Activated naive CD4-positive, alpha-beta T cell treated with anti-CD3 and anti-CD28 coated beads for 36 hours (primary cell): ENCODE measurements at regions of chr1 and their contacts with region 1.

Region 1: DNA sequence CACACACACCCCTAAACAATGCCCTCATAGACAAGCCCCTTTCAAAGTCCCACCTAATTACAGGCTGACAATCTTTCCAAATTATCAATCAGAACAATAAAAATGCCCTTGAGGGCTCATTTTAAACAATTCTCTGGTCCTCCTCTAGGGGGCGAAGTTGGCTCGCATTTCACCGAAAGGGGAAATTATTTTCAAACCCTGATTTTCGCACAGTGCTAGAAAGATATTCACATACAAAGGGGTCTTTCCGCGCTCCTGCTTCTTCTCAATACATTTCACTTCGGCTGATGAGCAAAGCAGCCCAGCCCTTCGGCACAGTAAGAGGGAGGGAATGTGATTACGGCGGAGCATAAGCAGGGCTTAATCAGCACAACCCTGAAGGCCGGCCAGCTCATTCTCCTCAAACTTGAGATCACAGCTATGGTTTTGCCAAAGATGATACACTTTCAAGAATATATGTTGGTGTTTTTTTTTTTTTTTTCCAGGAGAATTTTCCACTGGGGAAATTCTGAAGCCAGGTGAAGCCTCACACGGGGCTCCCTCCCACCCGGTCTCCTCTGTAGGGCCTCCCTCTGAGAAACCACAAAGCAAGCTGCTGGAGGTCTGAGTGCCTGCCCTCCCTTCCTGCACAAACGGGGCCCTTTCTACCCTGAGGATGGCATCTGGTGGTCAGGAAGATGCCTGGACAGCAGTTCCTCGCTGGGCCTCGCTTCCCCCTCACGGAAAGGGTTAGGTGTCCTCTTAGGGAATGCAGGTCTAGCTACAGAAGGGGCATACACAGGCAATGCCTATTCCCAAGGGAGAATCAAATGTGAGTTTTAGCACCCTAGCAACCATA is 66.9 kb downstream of the GNG12 start:
- DNase-seq: peak; percentile 63
- H3K4me3 Mint-ChIP-seq: no peak overlapping the region
- H3K27ac Mint-ChIP-seq: no peak overlapping the region
- H3K4me1 Mint-ChIP-seq: peaks cover 11% of the 10 kb centered on the region
- H3K27me3 Mint-ChIP-seq: peaks cover 18% of the 10 kb centered on the region

Region 2: DNA sequence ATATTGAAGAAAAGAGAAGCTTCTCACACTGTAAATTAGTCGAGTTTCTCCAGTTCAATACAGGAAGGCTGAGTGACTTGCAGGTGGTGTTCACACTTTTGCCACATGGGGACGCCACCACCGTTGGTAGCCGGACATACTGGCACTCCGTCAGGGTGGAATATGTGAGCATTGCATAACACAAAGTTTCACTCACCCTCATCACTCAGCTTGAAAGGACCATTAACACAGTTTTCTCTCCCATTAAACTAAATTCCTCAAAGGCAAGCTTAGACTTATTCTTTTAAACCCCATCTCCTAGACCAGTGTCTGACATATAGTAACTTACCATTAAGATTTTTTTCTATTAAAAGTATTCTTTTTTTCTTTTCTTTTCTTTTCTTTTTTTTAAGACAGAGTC is 230.9 kb before region 1 on chr1:
- CTCF ChIA-PET with region 1: interaction called, 82 read pairs
- intact Hi-C with region 1: no loop called
- DNase-seq: peak; percentile 81
- H3K4me3 Mint-ChIP-seq: no peak overlapping the region
- H3K27ac Mint-ChIP-seq: no peak overlapping the region
- H3K4me1 Mint-ChIP-seq: no peaks in the 10 kb centered on the region
- H3K27me3 Mint-ChIP-seq: peaks cover 4% of the 10 kb centered on the region

Region 3: DNA sequence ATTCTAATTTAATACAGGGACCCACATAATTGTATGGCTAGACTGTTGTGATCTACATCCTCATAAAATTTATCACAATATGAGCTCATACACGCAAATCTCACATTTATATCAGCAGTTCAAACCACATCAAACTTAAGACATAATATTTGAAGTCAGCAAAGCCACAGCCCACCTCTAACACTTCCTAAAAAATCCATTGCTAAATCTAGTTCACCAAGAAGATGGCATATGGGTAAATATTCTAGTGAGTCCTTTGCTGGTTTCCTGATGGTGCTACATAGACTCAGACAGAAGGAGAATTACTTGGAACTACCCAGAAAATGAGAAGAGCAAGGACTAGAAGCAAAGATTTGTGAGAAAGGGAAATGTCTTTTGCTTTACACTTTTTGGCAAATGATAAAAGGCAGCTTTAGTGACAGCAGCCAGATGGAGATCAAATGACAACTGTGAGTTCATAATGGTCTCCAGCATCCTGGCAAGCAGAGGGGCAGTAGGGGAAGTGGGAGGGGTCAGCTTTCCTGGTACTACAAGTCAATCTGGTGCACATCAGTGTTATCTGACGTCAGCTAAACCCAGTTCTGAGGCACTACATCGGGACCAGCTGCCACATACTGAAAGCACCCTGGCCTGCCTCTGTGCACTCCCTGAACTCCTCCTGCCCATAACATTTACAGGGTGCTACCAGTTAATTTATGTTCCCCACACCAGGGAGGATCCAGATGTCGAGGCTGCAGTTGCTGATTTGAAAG is 91.9 kb before region 1 on chr1:
- CTCF ChIA-PET with region 1: interaction called, 11 read pairs
- intact Hi-C with region 1: no loop called
- DNase-seq: peak; percentile 82
- H3K4me3 Mint-ChIP-seq: peak overlapping the region; percentile 16
- H3K27ac Mint-ChIP-seq: peak overlapping the region; percentile 85
- H3K4me1 Mint-ChIP-seq: peaks cover 22% of the 10 kb centered on the region
- H3K27me3 Mint-ChIP-seq: no peaks in the 10 kb centered on the region

Region 4: DNA sequence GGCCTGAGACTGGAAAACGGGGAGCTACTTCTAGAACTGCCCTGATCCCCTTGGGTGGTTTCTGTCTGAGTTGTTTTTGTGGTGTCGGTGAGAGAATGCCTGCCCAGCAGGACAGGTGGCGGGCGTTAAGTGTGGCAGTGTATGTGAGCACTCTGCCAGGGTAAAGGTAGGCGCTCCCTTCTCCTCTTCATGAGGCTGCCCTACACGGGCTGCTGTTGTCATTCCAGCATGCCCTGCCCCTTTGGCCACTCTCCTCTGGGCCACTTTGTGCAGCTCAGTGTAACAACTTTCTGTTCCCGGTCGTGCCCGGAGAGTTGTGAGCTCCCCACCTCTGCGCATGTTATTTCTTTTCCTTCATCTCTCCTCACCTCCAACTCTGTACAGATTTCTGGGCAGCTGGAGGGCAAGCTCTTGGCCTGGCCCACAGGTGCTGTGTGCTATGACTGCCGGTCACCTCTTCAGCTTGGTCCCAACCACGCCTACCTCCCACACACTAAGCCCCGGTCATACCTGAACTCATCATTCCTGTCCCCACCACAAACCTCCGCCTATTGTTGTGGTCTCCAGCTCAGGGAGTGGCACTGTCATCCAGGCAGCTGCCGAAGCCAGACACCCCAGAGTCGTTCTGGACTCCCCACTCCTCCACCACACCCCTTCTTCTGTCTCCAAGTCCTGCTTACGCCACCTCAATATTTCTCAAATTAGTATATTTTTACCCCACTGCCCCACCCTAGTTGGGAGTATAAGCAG is 12.4 kb before region 1 on chr1:
- CTCF ChIA-PET with region 1: interaction called, 18 read pairs
- intact Hi-C with region 1: no loop called
- DNase-seq: peak; percentile 39
- H3K4me3 Mint-ChIP-seq: no peak overlapping the region
- H3K27ac Mint-ChIP-seq: no peak overlapping the region
- H3K4me1 Mint-ChIP-seq: peaks cover 10% of the 10 kb centered on the region
- H3K27me3 Mint-ChIP-seq: no peaks in the 10 kb centered on the region

Region 5: DNA sequence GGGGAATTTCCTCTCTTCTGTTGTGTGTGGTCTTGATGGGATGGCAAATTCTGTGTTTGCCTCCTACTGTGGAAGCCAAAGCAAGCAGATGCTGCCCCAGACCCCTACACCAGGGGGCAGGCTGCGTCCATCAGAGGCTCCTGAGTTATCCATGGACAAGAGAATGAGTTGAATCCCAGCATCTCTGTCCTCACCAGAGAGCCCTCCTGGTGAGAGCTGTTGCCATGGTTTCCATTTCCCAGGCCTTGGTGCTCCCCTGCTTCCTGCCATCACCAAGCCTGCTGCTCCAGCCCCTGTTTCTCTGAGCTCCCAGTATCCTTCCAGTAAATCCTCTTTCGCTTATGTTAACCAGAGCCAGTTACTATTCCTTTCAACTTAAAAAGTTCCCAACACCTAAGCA is 87.3 kb after region 1 on chr1:
- CTCF ChIA-PET with region 1: interaction called, 22 read pairs
- intact Hi-C with region 1: loop called (anchors 1 kb)
- DNase-seq: peak; percentile 33
- H3K4me3 Mint-ChIP-seq: no peak overlapping the region
- H3K27ac Mint-ChIP-seq: no peak overlapping the region
- H3K4me1 Mint-ChIP-seq: no peaks in the 10 kb centered on the region
- H3K27me3 Mint-ChIP-seq: peaks cover 23% of the 10 kb centered on the region

Region 6: GRCh38 chr1:68120136-68120791 is 353.9 kb after region 1 on chr1:
- CTCF ChIA-PET with region 1: interaction called, 15 read pairs
- intact Hi-C with region 1: loop called (anchors 1 kb)
- DNase-seq: peak; percentile 51
- H3K4me3 Mint-ChIP-seq: no peak overlapping the region
- H3K27ac Mint-ChIP-seq: no peak overlapping the region
- H3K4me1 Mint-ChIP-seq: peaks cover 4% of the 10 kb centered on the region
- H3K27me3 Mint-ChIP-seq: peaks cover 6% of the 10 kb centered on the region

Region 7: DNA sequence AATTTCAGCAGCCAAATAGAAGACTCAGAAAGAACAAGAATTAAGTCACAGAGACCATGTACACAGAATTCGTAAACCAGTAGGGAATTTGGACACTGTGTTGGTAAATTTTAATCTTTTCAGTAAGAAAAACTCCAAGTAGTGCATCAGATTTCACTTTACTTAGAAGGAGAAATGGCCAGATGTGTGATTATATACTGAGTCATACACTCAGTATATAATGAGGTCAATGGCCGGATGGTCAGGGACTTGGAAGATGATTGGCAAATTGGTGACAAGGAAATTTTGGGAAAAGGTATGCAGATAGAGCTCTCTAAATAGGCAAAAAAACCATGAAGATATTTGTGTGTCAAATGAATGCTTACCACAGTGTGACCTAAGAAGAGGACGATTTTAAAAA is 1401.5 kb after region 1 on chr1:
- CTCF ChIA-PET with region 1: no interaction called
- intact Hi-C with region 1: no loop called
- DNase-seq: no peak
- H3K4me3 Mint-ChIP-seq: no peak overlapping the region
- H3K27ac Mint-ChIP-seq: no peak overlapping the region
- H3K4me1 Mint-ChIP-seq: no peaks in the 10 kb centered on the region
- H3K27me3 Mint-ChIP-seq: no peaks in the 10 kb centered on the region